Endothelial cell of umbilical vein (primary cell): ENCODE measurements at regions of chr10 and their contacts with region 1.

Region 1: DNA sequence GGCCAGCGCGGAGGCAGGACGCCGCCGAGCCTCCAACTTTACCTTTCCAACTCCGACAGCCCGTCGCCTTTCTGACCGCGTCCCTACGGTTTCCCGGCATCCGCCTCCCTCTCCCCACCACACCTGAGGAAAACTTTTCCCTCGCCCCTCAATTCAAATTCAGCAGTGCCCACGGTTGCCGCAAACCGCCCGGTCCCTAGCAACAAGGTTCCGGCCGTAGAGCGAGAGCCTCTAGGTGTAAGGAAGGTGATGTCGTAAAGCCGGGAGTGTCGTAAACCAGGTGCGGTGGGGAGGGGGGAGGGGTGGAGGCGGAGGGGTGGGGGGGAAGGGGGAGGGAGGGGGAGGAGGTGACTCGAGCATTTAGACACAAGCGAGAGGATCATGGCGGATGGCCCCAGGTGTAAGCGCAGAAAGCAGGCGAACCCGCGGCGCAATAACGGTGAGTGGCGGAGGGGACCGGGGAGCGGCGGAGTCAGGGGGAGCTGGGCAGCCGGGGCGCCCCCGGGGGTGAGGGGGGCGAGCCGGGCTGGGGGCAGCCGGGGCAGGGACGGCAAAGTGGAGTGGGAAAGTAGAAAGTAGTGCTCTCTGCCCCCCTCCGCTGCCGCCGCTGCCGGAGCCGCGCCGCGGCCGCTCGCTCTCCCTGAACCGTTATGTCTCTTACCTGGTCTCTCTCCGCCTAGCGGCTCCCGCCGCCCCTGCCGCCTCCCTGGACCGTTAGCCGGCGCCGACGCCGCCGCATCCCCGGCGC is at the start of gene ZEB1:
- DNase-seq: peak; percentile 79
- H3K4me3 ChIP-seq: peak within 1 kb of the TSS; percentile 88 to 96 (median 94)
- H3K27ac ChIP-seq: peak within 1 kb of the TSS; percentile 96
- H3K4me1 ChIP-seq: peaks cover 64% of the 10 kb centered on the region
- H3K27me3 ChIP-seq: no peaks in the 10 kb centered on the region
- CTCF ChIP-seq: peak; percentile 19 to 55
- POLR2A ChIP-seq: no peak
- total RNA-seq, gene ZEB1: 117 and 130 TPM in 2 replicates

Region 2: GRCh38 chr10:30783939-30784500 is 535.0 kb before region 1 on chr10:
- CTCF ChIA-PET with region 1: interaction called, 6 read pairs
- POLR2A ChIA-PET with region 1: no interaction called
- dilution Hi-C with region 1: no loop called
- intact Hi-C with region 1: loop called (anchors 1 kb)
- DNase-seq: peak; percentile 89
- H3K4me3 ChIP-seq: no peak overlapping the region
- H3K27ac ChIP-seq: peak overlapping the region; percentile 92
- H3K4me1 ChIP-seq: peaks cover 40% of the 10 kb centered on the region
- H3K27me3 ChIP-seq: no peaks in the 10 kb centered on the region
- CTCF ChIP-seq: peak; percentile 92
- POLR2A ChIP-seq: peak; percentile 56

Region 3: GRCh38 chr10:30986053-30986555 is 332.9 kb before region 1 on chr10:
- CTCF ChIA-PET with region 1: no interaction called
- POLR2A ChIA-PET with region 1: no interaction called
- dilution Hi-C with region 1: no loop called
- intact Hi-C with region 1: loop called (anchors 1 kb)
- DNase-seq: peak; percentile 69
- H3K4me3 ChIP-seq: no peak overlapping the region
- H3K27ac ChIP-seq: peak overlapping the region; percentile 93
- H3K4me1 ChIP-seq: peaks cover 56% of the 10 kb centered on the region
- H3K27me3 ChIP-seq: no peaks in the 10 kb centered on the region
- CTCF ChIP-seq: no peak
- POLR2A ChIP-seq: no peak

Region 4: GRCh38 chr10:31083765-31084184 is 235.3 kb before region 1 on chr10:
- CTCF ChIA-PET with region 1: no interaction called
- POLR2A ChIA-PET with region 1: no interaction called
- dilution Hi-C with region 1: no loop called
- intact Hi-C with region 1: loop called (anchors 5 kb)
- DNase-seq: peak; percentile 43
- H3K4me3 ChIP-seq: no peak overlapping the region
- H3K27ac ChIP-seq: no peak overlapping the region
- H3K4me1 ChIP-seq: no peaks in the 10 kb centered on the region
- H3K27me3 ChIP-seq: no peaks in the 10 kb centered on the region
- CTCF ChIP-seq: peak; percentile 42 to 54
- POLR2A ChIP-seq: no peak

Region 5: DNA sequence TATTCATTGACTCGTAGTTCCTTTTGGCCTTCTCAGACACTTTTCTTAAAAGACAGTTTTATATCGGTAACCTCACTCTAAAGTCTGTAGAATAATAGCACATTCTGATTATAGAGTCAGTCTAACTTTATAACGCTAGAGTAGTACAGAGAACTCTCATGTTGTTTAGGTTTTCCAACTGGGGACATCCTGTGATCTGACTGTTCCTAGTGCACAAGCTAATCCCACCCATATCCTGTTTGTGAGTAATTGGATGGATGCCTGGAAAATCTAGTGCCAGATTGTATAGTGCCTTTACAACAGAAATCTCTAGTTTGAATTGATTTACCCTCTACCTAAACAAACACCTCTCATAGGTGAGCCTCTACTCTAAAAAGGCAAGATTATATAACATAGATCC is 107.4 kb after region 1 on chr10:
- CTCF ChIA-PET with region 1: no interaction called
- POLR2A ChIA-PET with region 1: no interaction called
- dilution Hi-C with region 1: no loop called
- intact Hi-C with region 1: loop called (anchors 5 kb)
- DNase-seq: peak; percentile 97
- H3K4me3 ChIP-seq: peak overlapping the region in 1 of 3 experiments; percentile 46
- H3K27ac ChIP-seq: peak overlapping the region; percentile 56
- H3K4me1 ChIP-seq: peaks cover 44% of the 10 kb centered on the region
- H3K27me3 ChIP-seq: no peaks in the 10 kb centered on the region
- CTCF ChIP-seq: no peak
- POLR2A ChIP-seq: peak; percentile 29

Region 6: DNA sequence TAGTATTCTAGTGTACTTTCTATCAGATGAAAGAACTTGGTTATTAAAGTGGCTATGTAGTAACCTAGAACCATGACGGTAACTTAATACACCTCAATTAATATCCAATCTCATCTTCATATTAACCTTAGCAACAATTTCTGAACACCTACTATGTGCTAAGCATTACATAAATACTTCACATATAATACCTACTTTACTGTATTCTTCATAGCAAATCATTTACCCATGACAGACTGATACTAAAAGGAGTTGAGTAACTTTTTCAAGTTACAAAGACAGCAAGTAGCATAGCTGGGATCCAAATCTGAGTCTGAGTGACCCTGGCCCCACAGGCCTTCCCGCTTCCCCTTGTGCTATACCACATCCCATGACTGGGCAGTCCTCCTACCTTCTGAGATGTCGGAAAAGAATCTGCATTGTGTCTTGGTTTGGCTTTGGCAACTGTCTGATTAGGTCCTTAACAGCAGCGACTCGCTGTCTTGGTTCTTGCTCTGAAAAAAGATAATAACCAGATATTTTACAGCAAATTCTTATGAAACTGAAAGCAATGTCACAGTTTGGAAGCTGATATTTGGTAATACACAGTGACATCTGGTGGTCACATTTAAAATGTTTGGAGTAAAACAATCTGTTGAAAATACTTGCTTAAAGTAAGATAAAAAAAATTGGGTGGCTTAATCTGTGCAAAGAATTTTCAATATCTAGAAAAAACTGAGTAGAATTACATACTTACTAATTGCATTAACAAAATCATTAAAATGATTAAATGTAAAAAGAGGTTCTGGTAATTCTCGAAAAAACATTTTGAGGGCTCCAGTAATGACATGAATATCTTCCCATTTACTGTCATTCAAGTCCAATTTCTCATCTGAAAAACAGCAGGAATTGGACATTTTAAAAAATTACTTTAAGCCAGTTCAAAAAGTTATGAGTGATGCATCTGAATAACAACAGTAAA is 489.5 kb after region 1 on chr10:
- CTCF ChIA-PET with region 1: interaction called, 4 read pairs
- POLR2A ChIA-PET with region 1: no interaction called
- dilution Hi-C with region 1: no loop called
- intact Hi-C with region 1: loop called (anchors 5 kb)
- DNase-seq: peak; percentile 81
- H3K4me3 ChIP-seq: no peak overlapping the region
- H3K27ac ChIP-seq: peak overlapping the region; percentile 69
- H3K4me1 ChIP-seq: peaks cover 4% of the 10 kb centered on the region
- H3K27me3 ChIP-seq: no peaks in the 10 kb centered on the region
- CTCF ChIP-seq: peak; percentile 10 to 27
- POLR2A ChIP-seq: no peak